ENCODE measurements at regions of chr20 and their contacts with region 1.

Region 1: GRCh38 chr20:45095753-45096371 is 5.1 kb downstream of the KCNS1 start:
- DNase-seq: peak; percentile 31
- H3K4me3 Mint-ChIP-seq: no peak overlapping the region
- H3K27ac Mint-ChIP-seq: no peak overlapping the region
- H3K4me1 Mint-ChIP-seq: peaks cover 8% of the 10 kb centered on the region
- H3K27me3 Mint-ChIP-seq: peaks cover 35% of the 10 kb centered on the region

Region 2: GRCh38 chr20:44683263-44684046 is 412.4 kb before region 1 on chr20:
- intact Hi-C with region 1: loop called (anchors 10 kb)
- DNase-seq: peak; percentile 25
- H3K4me3 Mint-ChIP-seq: no peak overlapping the region
- H3K27ac Mint-ChIP-seq: no peak overlapping the region
- H3K4me1 Mint-ChIP-seq: peaks cover 17% of the 10 kb centered on the region
- H3K27me3 Mint-ChIP-seq: no peaks in the 10 kb centered on the region

Region 3: DNA sequence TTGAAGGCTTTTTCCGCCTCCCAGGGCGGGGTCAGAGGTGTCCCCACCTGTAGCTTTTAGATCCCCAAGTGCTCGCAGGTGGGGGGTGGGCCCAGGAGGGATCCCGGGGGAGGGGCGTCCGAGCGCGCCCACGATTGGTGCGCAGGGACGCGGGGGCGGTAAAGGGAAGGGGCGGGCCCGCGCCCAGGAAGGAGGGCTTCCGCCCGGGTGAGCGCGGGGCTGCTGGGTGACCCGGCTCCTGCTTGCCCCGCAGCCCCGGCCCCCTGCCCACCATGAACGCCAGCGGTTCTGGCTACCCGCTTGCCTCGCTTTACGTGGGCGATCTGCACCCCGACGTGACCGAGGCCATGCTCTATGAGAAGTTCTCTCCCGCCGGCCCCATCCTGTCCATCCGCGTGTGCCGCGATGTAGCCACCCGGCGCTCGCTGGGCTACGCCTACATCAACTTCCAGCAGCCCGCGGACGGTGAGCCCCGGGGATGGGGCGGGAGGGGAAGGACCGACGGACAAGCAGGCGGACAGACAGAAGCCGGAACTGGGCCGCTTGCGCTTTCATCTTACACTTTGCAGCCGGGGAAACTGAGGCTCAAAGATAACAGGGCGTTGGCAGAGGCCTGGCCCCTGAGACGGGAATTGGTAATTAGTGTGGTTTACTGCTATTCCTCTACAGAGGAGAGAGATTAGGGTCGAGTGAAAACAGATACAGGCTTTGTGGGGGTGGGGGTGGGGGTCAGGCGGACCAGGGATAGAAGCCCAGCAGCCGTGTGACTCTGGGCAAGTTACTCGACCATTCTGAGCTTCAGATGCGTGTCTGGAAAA is 185.8 kb before region 1 on chr20 and contains the start of gene PABPC1L:
- intact Hi-C with region 1: loop called (anchors 5 kb)
- DNase-seq: peak; percentile 72
- H3K4me3 Mint-ChIP-seq: peak within 1 kb of the TSS; percentile 87
- H3K27ac Mint-ChIP-seq: peak within 1 kb of the TSS; percentile 84
- H3K4me1 Mint-ChIP-seq: peaks cover 32% of the 10 kb centered on the region
- H3K27me3 Mint-ChIP-seq: no peaks in the 10 kb centered on the region
- total RNA-seq, gene PABPC1L: 101 and 106 TPM in 2 replicates

Region 4: GRCh38 chr20:45011108-45011526 is 84.7 kb before region 1 on chr20:
- intact Hi-C with region 1: loop called (anchors 1 kb)
- DNase-seq: no peak
- H3K4me3 Mint-ChIP-seq: no peak overlapping the region
- H3K27ac Mint-ChIP-seq: no peak overlapping the region
- H3K4me1 Mint-ChIP-seq: peaks cover 44% of the 10 kb centered on the region
- H3K27me3 Mint-ChIP-seq: no peaks in the 10 kb centered on the region

Region 5: GRCh38 chr20:45021631-45022030 is 74.2 kb before region 1 on chr20:
- intact Hi-C with region 1: no loop called
- DNase-seq: no peak
- H3K4me3 Mint-ChIP-seq: no peak overlapping the region
- H3K27ac Mint-ChIP-seq: no peak overlapping the region
- H3K4me1 Mint-ChIP-seq: peaks cover 14% of the 10 kb centered on the region
- H3K27me3 Mint-ChIP-seq: no peaks in the 10 kb centered on the region

Region 6: DNA sequence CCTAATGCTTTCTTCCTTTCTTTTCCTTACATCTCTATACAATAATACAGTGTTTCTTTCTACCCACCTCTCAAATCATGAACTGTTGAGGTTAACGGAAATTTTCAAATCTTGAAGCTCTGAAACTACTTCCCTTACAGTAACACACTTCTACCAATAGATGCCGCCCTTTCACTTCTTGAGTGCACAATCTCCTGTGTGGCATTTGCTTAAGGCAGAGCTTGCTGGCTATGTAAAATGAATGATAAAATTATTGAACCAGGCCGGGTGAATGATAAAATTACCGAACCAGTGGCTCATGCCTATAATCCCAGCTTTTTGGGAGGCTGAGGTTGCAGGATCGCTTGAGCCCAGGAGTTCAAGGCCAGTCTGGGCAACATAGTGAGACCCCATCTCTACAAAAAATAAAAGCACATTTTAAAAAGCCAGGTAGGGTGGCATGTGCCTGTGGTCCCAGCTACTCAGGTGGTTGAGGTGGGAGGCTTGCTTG is 51.7 kb before region 1 on chr20:
- intact Hi-C with region 1: loop called (anchors 1 kb)
- DNase-seq: peak; percentile 21
- H3K4me3 Mint-ChIP-seq: no peak overlapping the region
- H3K27ac Mint-ChIP-seq: peak overlapping the region; percentile 58
- H3K4me1 Mint-ChIP-seq: peaks cover 49% of the 10 kb centered on the region
- H3K27me3 Mint-ChIP-seq: no peaks in the 10 kb centered on the region

Region 7: DNA sequence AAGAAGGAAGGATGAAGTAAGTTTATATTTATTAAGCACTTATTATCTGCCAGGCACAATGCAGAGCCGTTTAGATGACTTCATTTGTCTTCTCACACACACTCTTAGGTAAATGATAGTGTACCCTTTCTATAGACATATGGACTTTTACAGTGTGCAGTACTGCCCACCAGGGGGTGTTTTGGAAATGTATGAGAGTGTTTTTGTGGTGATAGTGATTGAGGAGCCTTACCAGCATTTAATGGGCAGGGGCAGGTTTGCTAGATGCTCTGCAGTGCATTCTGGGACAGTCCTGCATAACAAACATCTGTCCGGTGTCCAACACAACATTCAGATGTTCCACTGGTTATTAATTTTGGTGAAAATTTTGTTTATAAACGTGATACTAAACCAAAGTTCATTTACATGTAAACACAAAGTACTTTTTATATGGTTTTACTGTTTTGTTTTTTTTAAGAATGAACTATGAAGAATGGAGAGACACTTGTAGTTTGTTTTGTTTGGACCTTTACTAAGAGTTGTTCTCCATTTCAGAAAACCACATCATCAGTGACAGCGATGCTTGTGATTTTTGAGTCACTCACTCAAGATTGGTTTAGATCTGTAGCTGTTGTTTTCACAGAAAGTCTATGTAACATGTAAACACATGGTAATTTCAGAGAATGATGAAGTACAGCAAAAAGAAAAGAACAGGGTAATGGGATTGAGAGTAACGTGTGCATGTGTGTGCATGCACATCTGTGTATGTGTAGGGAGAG is 14.8 kb before region 1 on chr20:
- intact Hi-C with region 1: loop called (anchors 2 kb)
- DNase-seq: no peak
- H3K4me3 Mint-ChIP-seq: no peak overlapping the region
- H3K27ac Mint-ChIP-seq: no peak overlapping the region
- H3K4me1 Mint-ChIP-seq: peaks cover 4% of the 10 kb centered on the region
- H3K27me3 Mint-ChIP-seq: no peaks in the 10 kb centered on the region

Region 8: GRCh38 chr20:45293041-45294002 is 197.5 kb after region 1 on chr20:
- intact Hi-C with region 1: loop called (anchors 1 kb)
- DNase-seq: peak; percentile 78
- H3K4me3 Mint-ChIP-seq: peak overlapping the region; percentile 76
- H3K27ac Mint-ChIP-seq: no peak overlapping the region
- H3K4me1 Mint-ChIP-seq: peaks cover 5% of the 10 kb centered on the region
- H3K27me3 Mint-ChIP-seq: peaks cover 22% of the 10 kb centered on the region